Testis (tissue), 5 donors: ENCODE measurements at regions of chr17 and their contacts with region 1.

Region 1: DNA sequence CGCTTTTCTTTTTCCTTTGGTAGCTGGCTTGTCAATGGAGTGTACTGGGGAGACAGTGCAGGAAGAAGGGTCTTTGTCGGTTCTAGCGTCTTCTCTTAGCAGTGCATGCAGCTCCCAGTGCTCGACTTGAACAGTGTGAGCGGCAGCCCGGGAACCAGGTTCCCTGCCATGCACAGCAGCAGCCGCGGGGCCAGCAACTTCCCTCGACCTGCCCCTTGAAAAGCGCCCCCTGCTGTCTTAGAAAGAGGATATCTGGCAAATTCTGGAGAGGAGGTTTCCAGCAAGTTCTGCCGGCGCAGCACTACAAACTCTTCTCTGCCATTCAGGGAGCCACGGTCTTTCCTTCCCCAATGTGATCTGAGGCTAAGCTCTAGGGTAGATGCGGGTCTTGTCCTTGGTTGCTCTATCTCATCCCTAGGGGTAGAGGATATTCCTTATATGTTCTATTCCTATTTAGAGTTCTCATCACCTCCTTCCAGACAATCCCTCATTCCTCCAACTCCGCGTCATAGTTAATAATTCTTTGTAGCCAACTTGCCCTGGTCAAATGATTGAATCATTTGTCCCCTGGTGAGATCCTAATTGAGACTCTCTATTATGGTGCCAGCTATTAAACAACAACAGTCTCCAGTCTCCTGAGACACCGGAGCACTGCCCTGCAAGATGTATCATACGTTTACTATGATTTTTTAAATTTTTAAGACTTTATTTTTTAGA is 451.3 kb downstream of the PMP22 start:
- DNase-seq: peak; percentile 53
- H3K4me3 ChIP-seq: no peak overlapping the region
- H3K27ac ChIP-seq: no peak overlapping the region
- H3K4me1 ChIP-seq: no peaks in the 10 kb centered on the region
- H3K27me3 ChIP-seq: no peaks in the 10 kb centered on the region
- CTCF ChIP-seq: peak in 2 of 3 experiments; percentile 13 to 19
- POLR2A ChIP-seq: no peak

Region 2: GRCh38 chr17:13688716-13689115 is 1125.1 kb before region 1 on chr17:
- intact Hi-C with region 1: loop called (anchors 10 kb)
- DNase-seq: no peak
- H3K4me3 ChIP-seq: no peak overlapping the region
- H3K27ac ChIP-seq: no peak overlapping the region
- H3K4me1 ChIP-seq: no peaks in the 10 kb centered on the region
- H3K27me3 ChIP-seq: no peaks in the 10 kb centered on the region
- CTCF ChIP-seq: no peak
- POLR2A ChIP-seq: no peak